HCT116 (cell line): ENCODE measurements at regions of chr9 and their contacts with region 1.

Region 1: DNA sequence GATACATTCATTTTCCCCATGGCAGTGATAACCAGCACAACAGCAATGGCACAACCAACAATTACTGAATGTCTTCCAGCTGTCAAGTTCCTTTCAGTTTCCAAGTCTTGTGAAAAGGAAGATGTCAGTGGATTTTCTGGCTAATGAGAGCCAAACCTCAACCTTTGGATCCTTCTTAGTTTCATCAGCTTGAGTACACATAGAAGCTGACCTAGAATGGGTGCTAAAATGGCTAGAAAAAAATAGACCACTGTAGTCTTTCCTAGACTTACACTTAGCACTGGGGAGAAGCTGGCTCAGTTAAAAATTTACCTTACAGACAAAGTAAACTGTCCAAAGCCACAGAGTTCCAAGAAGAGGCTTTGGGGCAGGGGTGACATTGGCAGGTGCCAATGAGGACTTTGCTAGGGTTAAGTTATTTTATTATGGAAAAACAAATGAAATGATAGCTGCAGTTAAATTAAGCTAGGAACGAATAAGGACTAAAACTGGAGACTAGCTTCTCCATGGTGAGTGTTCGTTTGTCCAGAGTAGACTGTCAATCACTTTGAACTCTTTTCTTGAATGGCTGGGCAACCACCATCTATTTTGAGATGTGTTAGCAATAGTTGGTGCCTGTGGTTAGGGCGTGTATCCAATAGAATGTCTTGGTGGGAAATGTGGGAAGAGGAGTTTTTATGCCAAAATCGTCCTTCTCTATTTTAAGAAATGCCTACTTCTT is 25.9 kb upstream of the TXN start:
- DNase-seq: no peak
- ATAC-seq: no peak
- H3K4me3 ChIP-seq: no peak overlapping the region
- H3K27ac ChIP-seq: no peak overlapping the region
- H3K4me1 ChIP-seq: peaks cover 35 to 66% of the 10 kb centered on the region in 2 experiments
- H3K27me3 ChIP-seq: no peaks in the 10 kb centered on the region
- CTCF ChIP-seq: no peak
- POLR2A ChIP-seq: no peak
- RAD21 ChIP-seq: no peak

Region 2: GRCh38 chr9:110183208-110184145 is 98.7 kb before region 1 on chr9:
- CTCF ChIA-PET with region 1: no interaction called
- POLR2A ChIA-PET with region 1: no interaction called
- RAD21 ChIA-PET with region 1: no interaction called
- intact Hi-C with region 1: no loop called
- DNase-seq: peak; percentile 68
- ATAC-seq: peak; percentile 89
- H3K4me3 ChIP-seq: no peak overlapping the region
- H3K27ac ChIP-seq: no peak overlapping the region
- H3K4me1 ChIP-seq: peaks cover 0 to 26% of the 10 kb centered on the region in 2 experiments; a peak in 2 of 4 replicates
- H3K27me3 ChIP-seq: no peaks in the 10 kb centered on the region
- CTCF ChIP-seq: peak; percentile 74 to 84 (median 81)
- POLR2A ChIP-seq: no peak
- RAD21 ChIP-seq: peak; percentile 94

Region 3: GRCh38 chr9:110256380-110257096 is 25.6 kb before region 1 on chr9 and contains the start of gene TXN:
- CTCF ChIA-PET with region 1: no interaction called
- POLR2A ChIA-PET with region 1: interaction called, 23 read pairs
- RAD21 ChIA-PET with region 1: no interaction called
- intact Hi-C with region 1: no loop called
- DNase-seq: peak; percentile 51
- ATAC-seq: peak; percentile 83
- H3K4me3 ChIP-seq: peak within 1 kb of the TSS; percentile 76 to 86
- H3K27ac ChIP-seq: peak within 1 kb of the TSS; percentile 74
- H3K4me1 ChIP-seq: peaks cover 8 to 57% of the 10 kb centered on the region in 2 experiments
- H3K27me3 ChIP-seq: no peaks in the 10 kb centered on the region
- CTCF ChIP-seq: no peak
- POLR2A ChIP-seq: peak; percentile 99
- RAD21 ChIP-seq: no peak
- total RNA-seq, gene TXN: 421 TPM